Activated T-helper 2 cell treated with anti-CD3 and anti-CD28 coated beads, Interferon-gamma antibody, Interleukin-2, Interleukin-4, amounts not matched to agents 10 μg/mL and 5 μg/mL and 100 μg/mL, durations not matched to agents 14 hours and 24 hours and 36 hours (primary cell): ENCODE measurements at regions of chr5 and their contacts with region 1.

Region 1: DNA sequence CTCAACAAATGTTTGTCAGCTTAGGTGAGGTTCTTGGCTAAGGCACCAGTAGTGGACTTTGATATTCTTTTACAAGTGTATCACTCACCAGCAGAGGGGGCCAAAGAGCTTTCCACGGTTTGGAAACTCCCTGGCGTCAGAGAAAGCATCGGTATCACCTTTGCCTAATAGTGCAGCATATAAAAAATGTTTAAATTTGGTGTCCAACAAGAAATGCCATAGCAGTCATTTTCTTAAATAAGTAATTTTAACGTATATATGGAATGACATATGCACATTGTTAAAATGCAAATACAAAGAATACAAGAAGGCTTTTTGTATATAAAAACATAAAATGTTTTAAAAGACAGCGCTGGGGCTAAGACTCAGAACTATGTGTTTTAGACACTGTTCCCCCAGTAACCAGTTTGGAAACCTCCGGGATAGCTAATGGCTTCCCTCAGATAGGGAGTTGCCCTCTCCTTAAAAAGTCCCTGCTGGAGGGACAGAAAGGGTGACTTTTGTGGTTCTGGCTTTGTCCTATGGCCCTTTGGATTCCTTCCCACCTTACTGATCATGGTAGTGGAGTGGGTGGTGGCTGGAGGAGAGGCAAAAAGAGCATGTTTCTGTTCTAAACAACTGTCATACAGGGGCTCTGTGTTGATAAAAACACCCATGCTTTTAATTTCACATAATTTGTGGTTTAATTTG is 124.6 kb downstream of the GPBP1 start:
- DNase-seq: peak; percentile 70
- H3K4me3 Mint-ChIP-seq: peak overlapping the region; percentile 57
- H3K27ac Mint-ChIP-seq: no peak overlapping the region
- H3K4me1 Mint-ChIP-seq: peaks cover 30% of the 10 kb centered on the region
- H3K27me3 Mint-ChIP-seq: peaks cover 7% of the 10 kb centered on the region

Region 2: GRCh38 chr5:57082441-57083067 is 215.9 kb before region 1 on chr5:
- intact Hi-C with region 1: no loop called
- DNase-seq: no peak
- H3K4me3 Mint-ChIP-seq: no peak overlapping the region
- H3K27ac Mint-ChIP-seq: no peak overlapping the region
- H3K4me1 Mint-ChIP-seq: no peaks in the 10 kb centered on the region
- H3K27me3 Mint-ChIP-seq: peaks cover 11% of the 10 kb centered on the region

Region 3: DNA sequence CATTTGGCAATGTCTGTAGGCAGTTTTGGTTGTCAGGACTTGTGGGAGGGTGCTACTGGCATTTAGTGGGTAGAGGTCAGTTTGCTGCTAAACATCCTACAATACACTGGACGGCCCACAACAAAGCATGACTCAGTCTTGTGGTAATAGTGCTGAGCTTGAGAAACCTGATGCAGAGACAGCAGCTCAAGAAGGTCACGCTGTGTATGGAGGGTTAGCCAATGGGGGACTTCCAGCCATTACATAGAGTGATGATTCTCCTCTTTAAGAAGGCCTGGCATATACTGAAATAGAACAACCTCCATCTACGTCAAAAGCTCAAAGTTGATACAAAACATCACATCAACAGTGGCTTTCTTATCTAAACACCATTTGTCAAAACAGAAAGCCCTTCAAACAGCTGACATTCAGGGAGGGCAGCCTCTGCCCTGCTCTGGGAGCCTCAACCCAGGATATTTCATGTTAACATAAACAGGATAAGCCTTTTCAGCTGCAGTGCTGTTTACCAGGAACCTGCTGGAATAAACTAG is 18.4 kb after region 1 on chr5:
- intact Hi-C with region 1: loop called (anchors 2 kb)
- DNase-seq: no peak
- H3K4me3 Mint-ChIP-seq: no peak overlapping the region
- H3K27ac Mint-ChIP-seq: peak overlapping the region; percentile 44
- H3K4me1 Mint-ChIP-seq: peaks cover 12% of the 10 kb centered on the region
- H3K27me3 Mint-ChIP-seq: no peaks in the 10 kb centered on the region

Region 4: GRCh38 chr5:57383093-57383861 is 84.8 kb after region 1 on chr5:
- intact Hi-C with region 1: loop called (anchors 1 kb)
- DNase-seq: peak; percentile 46
- H3K4me3 Mint-ChIP-seq: no peak overlapping the region
- H3K27ac Mint-ChIP-seq: peak overlapping the region; percentile 19
- H3K4me1 Mint-ChIP-seq: peaks cover 18% of the 10 kb centered on the region
- H3K27me3 Mint-ChIP-seq: peaks cover 2% of the 10 kb centered on the region

Region 5: GRCh38 chr5:57422993-57423392 is 124.6 kb after region 1 on chr5:
- intact Hi-C with region 1: no loop called
- DNase-seq: no peak
- H3K4me3 Mint-ChIP-seq: no peak overlapping the region
- H3K27ac Mint-ChIP-seq: no peak overlapping the region
- H3K4me1 Mint-ChIP-seq: no peaks in the 10 kb centered on the region
- H3K27me3 Mint-ChIP-seq: peaks cover 9% of the 10 kb centered on the region

Region 6: DNA sequence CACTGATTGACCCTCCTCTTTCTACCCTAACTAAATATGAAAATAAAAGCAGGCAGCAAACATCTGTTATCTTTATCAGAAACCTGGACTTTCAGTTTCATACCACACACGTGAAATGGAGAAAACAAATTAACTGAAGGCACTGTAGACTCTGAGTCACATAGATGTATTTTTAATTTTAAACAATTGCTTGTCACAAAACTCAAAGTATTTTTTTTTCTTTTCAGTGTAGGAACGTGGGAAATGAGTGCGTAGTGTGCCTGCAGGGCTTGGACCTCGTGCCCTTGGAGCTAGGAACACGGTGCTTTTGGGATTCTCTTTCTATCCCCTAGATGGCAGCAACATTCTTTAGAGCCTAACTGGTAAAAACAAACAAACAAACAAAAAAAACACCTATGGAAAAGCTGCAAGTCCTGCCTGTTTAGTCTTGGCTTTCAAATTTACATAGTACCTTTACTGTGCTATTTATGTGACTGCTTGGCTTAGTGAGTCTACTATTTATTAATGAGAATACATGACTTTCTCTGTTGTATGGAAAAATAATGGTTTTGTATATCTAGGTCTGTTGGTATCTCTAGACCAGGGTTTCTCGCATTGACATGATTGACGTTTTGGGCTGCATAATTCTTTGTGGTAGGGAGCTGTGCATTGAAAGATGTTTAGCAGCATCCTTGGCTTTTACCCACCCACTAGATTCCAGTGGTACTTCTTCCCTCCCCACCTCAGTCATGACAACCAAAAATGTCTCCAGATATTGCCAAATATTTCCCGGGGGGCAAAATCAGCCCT is 201.0 kb after region 1 on chr5:
- intact Hi-C with region 1: loop called (anchors 2 kb)
- DNase-seq: peak; percentile 20
- H3K4me3 Mint-ChIP-seq: peak overlapping the region; percentile 37
- H3K27ac Mint-ChIP-seq: peak overlapping the region; percentile 60
- H3K4me1 Mint-ChIP-seq: peaks cover 54% of the 10 kb centered on the region
- H3K27me3 Mint-ChIP-seq: peaks cover 4% of the 10 kb centered on the region

Region 7: DNA sequence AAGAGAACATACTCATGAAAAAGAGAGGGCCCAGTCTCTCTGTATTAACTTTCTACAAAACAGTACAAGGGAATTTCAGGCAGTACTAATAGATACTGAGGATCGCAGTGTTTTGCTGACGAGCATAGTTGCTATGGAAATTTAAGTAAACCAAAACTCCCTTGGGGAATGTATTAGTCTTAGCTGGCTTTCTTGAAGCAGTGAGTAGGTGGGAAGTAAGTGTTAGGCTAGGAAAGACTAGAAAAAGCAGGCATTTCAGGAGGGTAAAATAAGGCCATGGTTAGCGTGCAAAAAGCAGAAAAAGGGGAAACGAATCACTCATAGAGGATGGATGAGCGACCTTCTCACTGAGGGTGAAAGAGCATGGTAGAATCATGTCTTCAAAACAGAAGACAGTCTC is 268.5 kb after region 1 on chr5:
- intact Hi-C with region 1: no loop called
- DNase-seq: no peak
- H3K4me3 Mint-ChIP-seq: no peak overlapping the region
- H3K27ac Mint-ChIP-seq: no peak overlapping the region
- H3K4me1 Mint-ChIP-seq: no peaks in the 10 kb centered on the region
- H3K27me3 Mint-ChIP-seq: peaks cover 34% of the 10 kb centered on the region

Region 8: GRCh38 chr5:57779383-57780223 is 481.2 kb after region 1 on chr5:
- intact Hi-C with region 1: loop called (anchors 10 kb)
- DNase-seq: no peak
- H3K4me3 Mint-ChIP-seq: no peak overlapping the region
- H3K27ac Mint-ChIP-seq: no peak overlapping the region
- H3K4me1 Mint-ChIP-seq: no peaks in the 10 kb centered on the region
- H3K27me3 Mint-ChIP-seq: peaks cover 16% of the 10 kb centered on the region